Activated naive CD4-positive, alpha-beta T cell treated with anti-CD3 and anti-CD28 coated beads for 36 hours (primary cell): ENCODE measurements at regions of chr9 and their contacts with region 1.

Region 1: GRCh38 chr9:114587385-114588202 is at the start of gene ATP6V1G1:
- DNase-seq: peak; percentile 100
- H3K4me3 Mint-ChIP-seq: peak within 1 kb of the TSS; percentile 92
- H3K27ac Mint-ChIP-seq: peak within 1 kb of the TSS; percentile 96
- H3K4me1 Mint-ChIP-seq: peaks cover 43% of the 10 kb centered on the region
- H3K27me3 Mint-ChIP-seq: no peaks in the 10 kb centered on the region
- total RNA-seq, gene ATP6V1G1: 26.7 to 28.8 TPM

Region 2: DNA sequence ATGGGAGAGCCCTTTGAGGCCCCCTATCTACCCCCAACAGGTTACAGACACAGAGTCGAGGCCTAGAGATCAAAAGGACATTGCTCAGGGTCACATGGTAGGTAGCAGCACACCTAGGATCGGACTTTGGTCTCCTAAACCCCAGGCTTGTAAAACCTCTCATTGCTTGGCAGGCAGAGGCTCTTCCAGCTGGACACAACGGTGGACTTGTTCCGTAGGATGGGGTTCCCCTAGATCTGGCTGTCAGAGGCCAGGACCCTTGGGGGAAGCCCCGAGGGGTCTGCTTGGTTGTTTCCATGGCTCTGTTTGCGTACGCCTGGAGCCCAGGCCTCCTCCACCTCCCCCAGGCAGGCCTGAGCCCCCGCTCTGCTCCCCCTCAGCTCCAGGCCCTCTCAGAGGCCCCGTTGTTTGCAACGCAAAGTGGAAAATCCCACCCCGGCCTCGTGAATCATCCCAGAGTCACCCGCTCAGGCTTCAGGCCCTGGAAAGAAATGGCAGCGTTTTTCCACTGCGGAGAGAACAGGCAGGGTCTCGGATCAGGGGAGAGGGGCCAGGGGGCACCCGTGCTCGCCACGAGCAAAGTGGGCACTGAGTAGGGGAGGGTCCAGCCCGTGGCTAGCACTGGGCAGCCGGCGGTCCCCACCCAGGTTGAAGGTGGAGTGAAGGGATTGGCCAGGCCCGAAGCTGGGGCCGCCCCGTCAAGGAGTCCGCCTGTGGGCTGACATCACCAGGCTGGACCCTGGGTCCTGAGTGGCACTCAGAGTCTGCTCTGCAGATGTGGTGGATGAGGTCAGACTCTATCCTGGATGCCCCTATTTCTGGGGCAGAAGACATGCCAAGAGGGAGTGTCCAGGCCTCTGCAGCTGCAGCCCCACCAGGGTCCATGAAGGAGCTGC is 412.5 kb before region 1 on chr9:
- CTCF ChIA-PET with region 1: no interaction called
- intact Hi-C with region 1: no loop called
- DNase-seq: no peak
- H3K4me3 Mint-ChIP-seq: no peak overlapping the region
- H3K27ac Mint-ChIP-seq: no peak overlapping the region
- H3K4me1 Mint-ChIP-seq: no peaks in the 10 kb centered on the region
- H3K27me3 Mint-ChIP-seq: no peaks in the 10 kb centered on the region

Region 3: DNA sequence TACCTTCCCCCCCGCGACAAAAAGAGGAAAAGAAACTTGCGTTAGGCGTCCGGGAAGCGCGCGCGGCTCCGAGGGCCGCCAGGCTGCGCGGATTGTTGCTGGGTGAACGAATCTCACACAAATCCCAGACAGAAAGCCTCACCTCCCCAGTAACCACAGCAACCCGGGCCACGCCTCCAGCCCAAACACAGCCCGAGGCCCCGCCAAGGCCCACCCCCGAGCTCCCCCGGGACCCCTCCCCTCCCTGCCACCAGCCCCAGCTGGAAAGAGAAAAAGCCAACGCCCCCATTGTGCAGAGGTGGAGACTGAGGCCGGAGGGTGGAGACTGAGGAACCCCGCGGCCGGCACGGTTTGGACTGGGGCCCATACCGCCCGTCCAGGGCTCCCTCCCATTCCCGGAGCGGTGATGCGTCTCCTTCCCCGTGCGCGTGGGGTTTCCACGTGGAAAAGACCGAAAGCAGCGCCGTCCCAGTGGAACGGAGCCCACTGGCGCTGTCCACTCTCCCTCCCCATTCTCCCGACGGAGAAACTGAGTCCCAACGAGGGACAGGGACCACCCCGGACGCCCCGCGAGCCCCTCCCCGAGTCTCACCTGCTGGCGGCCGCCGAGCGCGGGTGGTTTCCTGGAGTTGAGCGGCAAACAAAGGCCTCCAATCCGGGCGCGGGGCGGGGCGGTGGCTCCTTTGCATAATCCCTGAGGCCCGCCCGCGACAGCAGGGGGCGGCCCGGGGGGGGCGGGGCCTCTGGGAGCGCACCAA is 189.6 kb before region 1 on chr9:
- CTCF ChIA-PET with region 1: no interaction called
- intact Hi-C with region 1: loop called (anchors 1 kb)
- DNase-seq: peak; percentile 97
- H3K4me3 Mint-ChIP-seq: peak overlapping the region; percentile 94
- H3K27ac Mint-ChIP-seq: peak overlapping the region; percentile 86
- H3K4me1 Mint-ChIP-seq: peaks cover 46% of the 10 kb centered on the region
- H3K27me3 Mint-ChIP-seq: no peaks in the 10 kb centered on the region

Region 4: GRCh38 chr9:114505187-114506081 is 82.2 kb before region 1 on chr9 and contains the start of gene WHRN:
- CTCF ChIA-PET with region 1: interaction called, 6 read pairs
- intact Hi-C with region 1: loop called (anchors 1 kb)
- DNase-seq: peak; percentile 90
- H3K4me3 Mint-ChIP-seq: peak within 1 kb of the TSS; percentile 76
- H3K27ac Mint-ChIP-seq: no peak within 1 kb of the TSS
- H3K4me1 Mint-ChIP-seq: peaks cover 5% of the 10 kb centered on the region
- H3K27me3 Mint-ChIP-seq: peaks cover 15% of the 10 kb centered on the region
- total RNA-seq, gene WHRN: 1.9 to 2.1 TPM

Region 5: GRCh38 chr9:114616653-114617520 is 29.3 kb after region 1 on chr9:
- CTCF ChIA-PET with region 1: interaction called, 18 read pairs
- intact Hi-C with region 1: loop called (anchors 1 kb)
- DNase-seq: peak; percentile 23
- H3K4me3 Mint-ChIP-seq: no peak overlapping the region
- H3K27ac Mint-ChIP-seq: peak overlapping the region; percentile 89
- H3K4me1 Mint-ChIP-seq: peaks cover 59% of the 10 kb centered on the region
- H3K27me3 Mint-ChIP-seq: no peaks in the 10 kb centered on the region

Region 6: DNA sequence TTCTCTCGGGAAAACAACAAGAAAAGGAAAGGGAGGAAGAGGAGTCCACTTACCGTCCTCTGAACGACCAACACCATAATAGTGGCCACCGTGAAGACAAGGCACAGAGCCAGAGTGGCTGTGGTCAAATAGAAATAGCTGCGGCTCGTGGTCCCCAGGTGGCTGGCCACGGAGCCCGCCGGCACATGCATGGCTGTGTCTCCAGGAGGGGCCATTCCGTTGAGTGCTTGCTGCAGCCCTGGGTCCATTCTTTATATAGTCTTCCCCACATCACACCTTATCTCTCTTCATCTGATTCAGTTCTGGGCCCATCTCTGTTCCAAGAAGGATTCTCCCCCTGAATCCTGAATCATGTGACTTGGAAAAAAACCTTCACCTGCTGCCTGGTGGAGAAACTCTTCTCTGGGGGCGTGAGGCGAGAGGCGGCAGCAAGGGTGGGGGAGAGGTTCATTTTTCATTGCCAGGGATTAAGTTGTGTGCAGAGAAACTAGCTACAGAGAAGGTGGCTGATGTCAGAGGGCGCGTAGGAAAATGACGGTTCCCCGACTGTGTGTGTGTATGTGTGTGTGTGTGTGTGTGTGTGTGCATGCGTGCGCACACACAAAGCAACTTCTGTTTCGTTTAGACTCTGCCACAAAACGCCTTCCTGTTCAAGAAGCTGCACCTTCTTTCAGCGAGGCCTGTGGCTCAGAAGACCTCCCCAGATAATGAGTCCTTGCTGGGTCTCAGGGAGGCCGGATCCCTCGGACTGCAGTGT is 342.6 kb after region 1 on chr9 and contains the start of gene TNFSF8:
- CTCF ChIA-PET with region 1: no interaction called
- intact Hi-C with region 1: loop called (anchors 10 kb)
- DNase-seq: peak; percentile 90
- H3K4me3 Mint-ChIP-seq: peak within 1 kb of the TSS; percentile 94
- H3K27ac Mint-ChIP-seq: peak within 1 kb of the TSS; percentile 97
- H3K4me1 Mint-ChIP-seq: peaks cover 38% of the 10 kb centered on the region
- H3K27me3 Mint-ChIP-seq: no peaks in the 10 kb centered on the region
- total RNA-seq, gene TNFSF8: 25.9 to 26.4 TPM